ENCODE measurements at regions of chr18 and their contacts with region 1.

Region 1: GRCh38 chr18:74652392-74652988 is 54.8 kb downstream of the ZNF407 start:
- DNase-seq: peak; percentile 47
- H3K4me3 ChIP-seq: no peak overlapping the region
- H3K27ac ChIP-seq: no peak overlapping the region
- H3K4me1 ChIP-seq: peaks cover 0 to 3% of the 10 kb centered on the region in 2 experiments; a peak in 2 of 4 replicates
- H3K27me3 ChIP-seq: no peaks in the 10 kb centered on the region
- CTCF ChIP-seq: peak; percentile 76
- EP300 ChIP-seq: no peak
- RAD21 ChIP-seq: peak; percentile 80

Region 2: GRCh38 chr18:74665905-74666304 is 13.4 kb after region 1 on chr18:
- CTCF ChIA-PET with region 1: no interaction called
- POLR2A ChIA-PET with region 1: no interaction called
- DNase-seq: no peak
- H3K4me3 ChIP-seq: no peak overlapping the region
- H3K27ac ChIP-seq: no peak overlapping the region
- H3K4me1 ChIP-seq: no peaks in the 10 kb centered on the region
- H3K27me3 ChIP-seq: no peaks in the 10 kb centered on the region
- CTCF ChIP-seq: no peak
- EP300 ChIP-seq: no peak
- RAD21 ChIP-seq: no peak

Region 3: DNA sequence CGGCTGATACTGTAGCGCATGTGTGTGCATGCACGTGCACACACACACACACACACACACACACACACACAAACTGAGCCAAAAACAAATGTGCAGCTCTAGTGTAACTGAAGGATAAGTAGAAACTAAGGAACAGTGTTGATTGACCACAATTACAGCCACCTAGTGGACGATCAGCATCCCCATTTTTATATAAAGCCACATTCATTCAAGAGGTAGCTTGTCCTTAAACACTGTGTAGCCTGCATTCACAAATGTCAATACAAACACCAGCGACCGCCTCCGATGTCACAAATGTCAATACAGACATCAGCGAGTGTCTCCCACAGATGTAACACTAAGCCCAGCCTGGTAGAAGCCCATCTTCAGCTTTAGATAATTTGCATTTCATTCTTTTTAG is 389.1 kb after region 1 on chr18:
- CTCF ChIA-PET with region 1: interaction called, 11 read pairs
- POLR2A ChIA-PET with region 1: no interaction called
- DNase-seq: no peak
- H3K4me3 ChIP-seq: no peak overlapping the region
- H3K27ac ChIP-seq: no peak overlapping the region
- H3K4me1 ChIP-seq: no peaks in the 10 kb centered on the region
- H3K27me3 ChIP-seq: no peaks in the 10 kb centered on the region
- CTCF ChIP-seq: peak; percentile 60
- EP300 ChIP-seq: no peak
- RAD21 ChIP-seq: peak; percentile 44

Region 4: GRCh38 chr18:75478996-75479880 is 826.7 kb after region 1 on chr18:
- CTCF ChIA-PET with region 1: interaction called, 18 read pairs
- POLR2A ChIA-PET with region 1: no interaction called
- DNase-seq: peak; percentile 57
- H3K4me3 ChIP-seq: no peak overlapping the region; a peak in 1 of 4 replicates
- H3K27ac ChIP-seq: no peak overlapping the region
- H3K4me1 ChIP-seq: no peaks in the 10 kb centered on the region
- H3K27me3 ChIP-seq: no peaks in the 10 kb centered on the region
- CTCF ChIP-seq: peak; percentile 73
- EP300 ChIP-seq: no peak
- RAD21 ChIP-seq: peak; percentile 88

Region 5: GRCh38 chr18:76252880-76253279 is 1600.4 kb after region 1 on chr18:
- CTCF ChIA-PET with region 1: interaction called, 10 read pairs
- POLR2A ChIA-PET with region 1: no interaction called
- DNase-seq: no peak
- H3K4me3 ChIP-seq: no peak overlapping the region; a peak in 1 of 4 replicates
- H3K27ac ChIP-seq: no peak overlapping the region
- H3K4me1 ChIP-seq: no peaks in the 10 kb centered on the region
- H3K27me3 ChIP-seq: no peaks in the 10 kb centered on the region
- CTCF ChIP-seq: no peak
- EP300 ChIP-seq: no peak
- RAD21 ChIP-seq: peak; percentile 45

Measured in SK-N-SH (cell line).